Motor neuron (in vitro differentiated cells): ENCODE measurements at regions of chr10 and their contacts with region 1.

Region 1: GRCh38 chr10:71319042-71319799 is at the start of gene SLC29A3:
- ATAC-seq: peak; percentile 88 to 95 (median 92)
- H3K4me3 ChIP-seq: peak within 1 kb of the TSS; percentile 47 to 68 (median 53)
- H3K27ac ChIP-seq: peak within 1 kb of the TSS; percentile 69 to 73
- H3K4me1 ChIP-seq: peaks cover 17% of the 10 kb centered on the region in 2 donors
- total RNA-seq, gene SLC29A3: 2.3 to 7.6 (median 4.1) TPM

Region 2: DNA sequence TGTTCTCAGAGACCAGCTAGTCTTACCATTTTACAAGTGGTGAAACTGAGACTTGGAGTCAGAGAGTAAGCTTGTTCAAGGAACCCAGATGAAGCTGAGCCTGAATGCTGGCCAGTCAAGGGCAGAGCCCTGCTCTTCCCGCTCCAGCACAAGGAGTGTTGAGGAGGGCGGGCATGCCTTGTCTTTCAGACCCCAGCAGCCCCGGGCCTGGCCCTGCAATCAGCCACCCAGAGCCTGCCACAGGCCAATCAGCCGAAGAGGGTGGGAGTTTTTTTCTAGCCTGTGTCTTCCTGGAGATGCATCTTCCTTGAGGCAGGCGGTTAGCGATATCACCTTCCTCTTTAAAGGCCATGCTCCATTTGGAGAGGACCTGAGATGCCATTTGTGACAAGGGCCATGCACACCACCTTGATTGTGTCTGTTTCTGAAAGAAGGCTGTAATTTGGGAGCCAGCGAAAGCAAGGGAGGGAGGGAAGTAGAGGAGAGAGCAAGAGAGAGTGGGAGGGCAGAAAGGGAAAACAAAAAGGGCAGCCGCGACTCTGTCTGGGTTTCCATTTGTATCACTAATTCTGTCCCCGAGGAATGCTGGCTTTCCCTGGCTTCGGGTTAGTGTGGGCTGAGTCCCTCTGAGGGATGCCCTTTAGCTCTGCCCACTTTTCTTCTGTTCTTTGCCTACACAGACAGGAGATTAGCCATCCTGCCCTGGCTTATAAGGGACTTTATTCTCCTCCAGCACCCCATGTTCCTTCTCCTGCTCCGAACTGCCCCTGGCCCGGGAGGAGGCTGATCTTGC is 85.5 kb after region 1 on chr10:
- in situ Hi-C with region 1: no loop called
- ATAC-seq: peak in 4 of 8 experiments; percentile 22 to 63 (median 56)
- H3K4me3 ChIP-seq: no peak overlapping the region
- H3K27ac ChIP-seq: peak overlapping the region in 1 of 2 donors; percentile 44
- H3K4me1 ChIP-seq: peaks cover 8 to 9% of the 10 kb centered on the region in 2 donors

Region 3: GRCh38 chr10:71888623-71889387 is 569.6 kb after region 1 on chr10:
- in situ Hi-C with region 1: loop called in 1 of 9 experiments (anchors 25 kb)
- ATAC-seq: peak; percentile 88 to 96 (median 96)
- H3K4me3 ChIP-seq: peak overlapping the region; percentile 33 to 53 (median 43)
- H3K27ac ChIP-seq: peak overlapping the region; percentile 38 to 59
- H3K4me1 ChIP-seq: peaks cover 8 to 9% of the 10 kb centered on the region in 2 donors